ENCODE measurements at regions of chr9 and their contacts with region 1.

Region 1: GRCh38 chr9:33374634-33375213 is 27.6 kb downstream of the AQP7 start:
- DNase-seq: peak; percentile 61 to 71 (median 67)
- H3K4me3 ChIP-seq: no peak overlapping the region
- H3K4me3 Mint-ChIP-seq: peak overlapping the region in 1 of 8 donors; percentile 11
- H3K27ac ChIP-seq: no peak overlapping the region
- H3K27ac Mint-ChIP-seq: peak overlapping the region in 5 of 7 donors; percentile 38 to 74 (median 66)
- H3K4me1 ChIP-seq: peaks cover 3% of the 10 kb centered on the region
- H3K4me1 Mint-ChIP-seq: peaks cover 0 to 7% (median 5%) of the 10 kb centered on the region in 4 donors
- H3K27me3 ChIP-seq: no peaks in the 10 kb centered on the region
- H3K27me3 Mint-ChIP-seq: no peaks in the 10 kb centered on the region

Region 2: DNA sequence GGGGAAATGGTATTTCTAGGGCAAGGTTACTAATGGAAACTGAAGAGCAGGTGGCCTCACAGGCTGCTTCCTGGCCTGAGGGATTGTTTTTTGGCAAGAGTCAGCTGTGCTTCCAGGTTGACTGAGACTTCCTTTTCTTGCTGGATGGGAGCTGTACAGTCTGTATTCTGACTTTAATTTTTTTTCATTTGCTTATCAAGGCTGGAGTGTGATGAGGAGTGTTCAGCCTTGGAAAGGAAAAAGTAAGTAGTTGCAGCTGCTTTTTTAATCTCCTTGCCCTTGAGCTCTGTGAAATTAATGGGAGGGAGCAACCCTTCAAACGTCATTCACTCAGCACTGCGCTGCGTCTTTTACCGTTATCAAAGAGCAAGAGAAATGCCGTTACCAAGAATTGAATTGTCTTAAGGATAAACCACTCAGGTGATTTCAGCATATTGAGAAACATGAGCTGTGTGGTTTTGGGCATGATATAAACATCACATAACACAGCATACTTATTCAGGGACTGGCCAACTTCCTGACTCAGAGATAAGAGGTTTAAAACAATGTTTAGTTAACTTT is 20.0 kb before region 1 on chr9:
- CTCF ChIA-PET with region 1: interaction called, 28 read pairs
- POLR2A ChIA-PET with region 1: no interaction called
- intact Hi-C with region 1: no loop called
- DNase-seq: peak in 1 of 5 donors; percentile 8
- H3K4me3 ChIP-seq: no peak overlapping the region
- H3K4me3 Mint-ChIP-seq: no peak overlapping the region
- H3K27ac ChIP-seq: no peak overlapping the region
- H3K27ac Mint-ChIP-seq: peak overlapping the region in 4 of 7 donors; percentile 22 to 66 (median 59)
- H3K4me1 ChIP-seq: no peaks in the 10 kb centered on the region
- H3K4me1 Mint-ChIP-seq: peaks cover 0 to 3% (median 0%) of the 10 kb centered on the region in 4 donors
- H3K27me3 ChIP-seq: no peaks in the 10 kb centered on the region
- H3K27me3 Mint-ChIP-seq: no peaks in the 10 kb centered on the region

Region 3: GRCh38 chr9:33446946-33447798 is 72.4 kb after region 1 on chr9 and contains the start of gene AQP3:
- CTCF ChIA-PET with region 1: interaction called, 47 read pairs
- POLR2A ChIA-PET with region 1: interaction called, 4 read pairs
- intact Hi-C with region 1: loop called (anchors 2 kb)
- DNase-seq: peak; percentile 76 to 84 (median 76)
- H3K4me3 ChIP-seq: peak within 1 kb of the TSS; percentile 68 to 73
- H3K4me3 Mint-ChIP-seq: peak within 1 kb of the TSS; percentile 92 to 98 (median 94)
- H3K27ac ChIP-seq: peak within 1 kb of the TSS; percentile 75
- H3K27ac Mint-ChIP-seq: peak within 1 kb of the TSS; percentile 94 to 98 (median 96)
- H3K4me1 ChIP-seq: peaks cover 65% of the 10 kb centered on the region
- H3K4me1 Mint-ChIP-seq: peaks cover 31 to 74% (median 48%) of the 10 kb centered on the region in 4 donors
- H3K27me3 ChIP-seq: no peaks in the 10 kb centered on the region
- H3K27me3 Mint-ChIP-seq: no peaks in the 10 kb centered on the region
- total RNA-seq, gene AQP3: 172 TPM

Region 4: DNA sequence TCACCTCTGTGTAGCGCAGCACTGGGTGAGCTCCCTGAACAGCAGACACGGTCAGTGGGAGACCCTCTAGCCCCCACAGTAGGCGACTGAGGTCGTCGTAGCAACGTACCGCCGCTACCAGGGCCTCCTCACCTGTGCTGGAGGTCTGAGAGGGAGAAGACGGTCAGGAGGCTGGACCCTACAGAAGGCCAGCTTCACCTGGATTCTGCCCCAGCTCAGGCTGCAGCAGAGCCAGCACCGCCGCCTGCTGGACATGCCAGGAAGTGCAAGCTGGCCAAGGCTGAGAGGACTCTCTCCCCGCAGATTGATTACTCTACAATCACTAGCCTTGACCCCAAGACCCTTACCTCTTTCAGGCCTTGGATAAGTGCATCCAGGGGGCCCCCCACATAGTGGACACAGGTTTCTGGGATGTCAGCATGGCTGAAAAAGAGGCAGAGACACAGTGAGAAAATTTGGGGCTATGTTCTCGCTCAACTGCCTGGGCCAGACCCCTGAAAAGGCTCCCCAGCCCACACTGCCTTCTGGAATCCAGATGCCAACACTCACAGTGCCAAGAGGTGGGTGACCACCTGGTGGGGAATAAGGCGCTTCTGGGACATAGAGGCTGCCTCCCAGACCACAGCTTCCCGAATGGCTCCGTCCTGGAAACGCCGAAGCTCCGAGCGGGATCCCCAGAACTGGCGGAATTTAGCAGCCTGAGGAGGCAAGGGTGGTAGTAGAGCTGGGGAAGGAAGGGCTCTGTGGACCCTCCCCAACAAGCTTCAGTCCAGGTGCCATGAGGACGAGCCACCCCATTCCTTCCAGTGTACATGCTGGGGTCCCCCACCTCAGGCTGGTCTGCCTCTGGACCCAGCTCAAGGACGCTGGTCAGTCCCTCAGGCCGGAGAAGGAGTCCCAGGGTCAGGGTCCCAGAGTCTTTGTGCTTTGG is 92.1 kb after region 1 on chr9:
- CTCF ChIA-PET with region 1: interaction called, 120 read pairs
- POLR2A ChIA-PET with region 1: interaction called, 11 read pairs
- intact Hi-C with region 1: loop called (anchors 1 kb)
- DNase-seq: peak; percentile 57 to 77 (median 61)
- H3K4me3 ChIP-seq: no peak overlapping the region
- H3K4me3 Mint-ChIP-seq: no peak overlapping the region
- H3K27ac ChIP-seq: no peak overlapping the region
- H3K27ac Mint-ChIP-seq: peak overlapping the region; percentile 13 to 83 (median 50)
- H3K4me1 ChIP-seq: peaks cover 6% of the 10 kb centered on the region
- H3K4me1 Mint-ChIP-seq: peaks cover 5 to 12% (median 7%) of the 10 kb centered on the region in 4 donors
- H3K27me3 ChIP-seq: no peaks in the 10 kb centered on the region
- H3K27me3 Mint-ChIP-seq: no peaks in the 10 kb centered on the region

Region 5: DNA sequence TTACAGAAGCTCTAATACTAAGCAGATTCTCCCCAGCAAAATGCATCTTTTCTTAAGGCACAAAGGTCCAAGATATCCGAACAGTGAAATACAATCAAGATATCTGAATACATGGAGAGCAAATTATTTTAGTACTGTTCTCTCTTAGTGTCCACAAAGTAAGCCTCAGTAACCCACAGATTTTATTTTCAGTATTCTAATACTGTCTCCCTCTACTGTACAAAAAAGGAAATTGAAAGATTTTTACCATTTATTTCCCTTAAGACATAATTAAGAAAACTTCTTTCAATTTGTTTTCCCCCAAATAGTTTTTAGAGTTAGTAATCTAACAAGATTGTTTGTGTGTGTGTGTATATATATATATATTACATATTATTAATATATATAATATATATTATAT is 123.7 kb after region 1 on chr9:
- CTCF ChIA-PET with region 1: interaction called, 11 read pairs
- POLR2A ChIA-PET with region 1: no interaction called
- intact Hi-C with region 1: no loop called
- DNase-seq: peak in 1 of 5 donors; percentile 16
- H3K4me3 ChIP-seq: no peak overlapping the region
- H3K4me3 Mint-ChIP-seq: no peak overlapping the region
- H3K27ac ChIP-seq: no peak overlapping the region
- H3K27ac Mint-ChIP-seq: peak overlapping the region in 1 of 7 donors; percentile 35
- H3K4me1 ChIP-seq: no peaks in the 10 kb centered on the region
- H3K4me1 Mint-ChIP-seq: no peaks in the 10 kb centered on the region
- H3K27me3 ChIP-seq: no peaks in the 10 kb centered on the region
- H3K27me3 Mint-ChIP-seq: peaks cover 1 to 4% of the 10 kb centered on the region in 2 donors

Region 6: DNA sequence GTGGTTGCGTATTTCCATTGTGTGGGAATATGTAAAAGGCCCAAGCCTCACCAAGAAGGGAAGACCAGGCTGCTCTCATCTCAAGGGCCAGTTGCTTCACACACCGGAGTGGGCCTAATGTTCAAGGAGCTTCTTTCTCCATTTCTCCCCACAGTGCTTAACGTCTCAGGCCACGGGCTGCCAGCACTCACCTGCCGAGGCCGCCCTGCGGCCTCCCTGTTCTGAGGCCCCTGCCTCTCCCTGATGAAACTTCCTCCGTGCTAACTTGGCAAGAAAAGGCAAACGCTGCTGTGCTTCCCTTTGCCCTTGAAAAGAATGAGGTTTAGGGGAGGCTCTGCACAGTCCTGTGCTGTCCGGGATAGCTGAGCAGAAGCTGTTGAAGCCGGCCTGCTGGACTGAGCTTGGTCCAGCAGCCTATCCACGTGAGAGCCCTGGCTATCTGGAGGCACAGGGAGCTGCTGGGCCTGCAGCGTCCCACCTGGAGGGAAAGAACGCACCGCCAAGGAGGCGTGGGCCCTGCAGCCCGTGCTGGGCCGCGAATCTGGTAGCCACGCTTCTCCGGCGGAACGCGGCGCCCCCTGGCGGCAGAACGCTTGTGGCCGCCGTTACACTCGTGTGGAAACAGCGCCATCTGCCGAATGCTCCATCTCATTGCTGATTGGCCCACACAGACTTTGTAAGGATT is 347.1 kb after region 1 on chr9:
- CTCF ChIA-PET with region 1: interaction called, 7 read pairs
- POLR2A ChIA-PET with region 1: no interaction called
- intact Hi-C with region 1: loop called (anchors 1 kb)
- DNase-seq: peak; percentile 79 to 85 (median 84)
- H3K4me3 ChIP-seq: no peak overlapping the region
- H3K4me3 Mint-ChIP-seq: peak overlapping the region in 1 of 8 donors; percentile 27
- H3K27ac ChIP-seq: no peak overlapping the region
- H3K27ac Mint-ChIP-seq: peak overlapping the region in 1 of 7 donors; percentile 63
- H3K4me1 ChIP-seq: no peaks in the 10 kb centered on the region
- H3K4me1 Mint-ChIP-seq: peaks cover 0 to 11% (median under 1%) of the 10 kb centered on the region in 4 donors
- H3K27me3 ChIP-seq: no peaks in the 10 kb centered on the region
- H3K27me3 Mint-ChIP-seq: peaks cover 6 to 7% of the 10 kb centered on the region in 2 donors